ENCODE measurements at regions of chr11 and their contacts with region 1.

Region 1: GRCh38 chr11:35237860-35238715 is 99.1 kb downstream of the CD44 start:
- DNase-seq: peak; percentile 34
- H3K4me3 Mint-ChIP-seq: no peak overlapping the region
- H3K27ac Mint-ChIP-seq: no peak overlapping the region
- H3K4me1 Mint-ChIP-seq: peaks cover 78% of the 10 kb centered on the region
- H3K27me3 Mint-ChIP-seq: peaks cover 13% of the 10 kb centered on the region

Region 2: DNA sequence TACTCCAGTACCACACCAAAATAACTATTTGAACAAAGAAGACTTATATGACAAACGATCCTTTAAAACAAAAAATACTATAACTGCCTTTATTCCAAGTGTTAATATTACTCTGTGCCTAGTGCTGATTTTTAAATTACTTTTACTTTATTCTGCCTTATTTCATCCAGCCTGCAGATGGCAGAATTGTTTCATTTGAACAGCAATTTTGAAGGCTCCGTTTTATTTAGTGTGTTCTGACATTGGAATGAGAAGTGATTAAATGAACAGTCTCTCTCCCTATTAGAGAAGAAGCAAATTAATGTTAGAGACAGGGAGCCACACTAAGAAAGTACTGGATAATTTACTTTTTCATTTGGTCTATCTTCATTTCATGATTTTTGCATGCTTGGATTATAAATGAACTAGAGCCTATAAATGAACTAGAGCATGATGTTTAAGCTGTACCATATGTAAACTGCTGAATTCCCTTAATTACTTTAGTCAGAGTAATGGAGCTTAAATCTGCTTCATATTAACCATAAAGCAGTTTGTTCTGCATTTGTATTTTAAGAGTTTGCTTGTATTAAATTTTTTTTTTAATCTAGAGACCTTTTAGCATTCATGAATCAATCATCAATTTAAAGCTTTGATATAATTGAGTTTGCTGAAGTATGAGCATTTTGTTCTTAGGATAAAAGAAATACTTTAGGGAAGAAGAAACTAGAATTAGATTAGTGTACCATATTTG is 311.8 kb before region 1 on chr11:
- intact Hi-C with region 1: loop called (anchors 5 kb)
- DNase-seq: no peak
- H3K4me3 Mint-ChIP-seq: no peak overlapping the region
- H3K27ac Mint-ChIP-seq: no peak overlapping the region
- H3K4me1 Mint-ChIP-seq: peaks cover 15% of the 10 kb centered on the region
- H3K27me3 Mint-ChIP-seq: no peaks in the 10 kb centered on the region

Region 3: DNA sequence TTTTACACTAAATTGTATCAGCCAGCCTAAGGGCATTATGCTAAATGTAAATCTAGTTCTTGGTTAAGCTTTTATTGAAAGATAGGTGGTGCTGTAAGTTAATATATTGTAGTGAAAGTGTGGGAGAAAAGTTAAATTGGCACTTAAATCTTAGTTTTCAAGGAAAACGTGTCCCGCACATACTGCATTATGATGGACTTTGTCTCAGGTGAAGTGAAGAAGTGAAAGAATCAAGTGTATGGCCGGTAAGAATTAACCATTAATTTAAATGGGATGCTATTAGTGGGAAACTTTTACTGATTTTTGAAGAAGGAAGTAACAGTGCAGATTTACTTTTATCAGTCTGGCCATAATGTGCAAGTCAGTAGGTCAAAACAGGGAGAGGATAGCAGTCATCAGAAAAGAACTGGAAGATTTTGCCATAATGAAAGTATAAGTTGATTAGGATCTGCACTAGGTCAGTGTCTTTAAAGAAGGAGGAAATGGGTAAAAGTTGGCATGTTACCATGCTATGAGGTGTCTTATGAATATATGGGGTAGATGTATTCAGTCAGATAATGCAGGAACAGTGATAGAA is 240.0 kb before region 1 on chr11:
- intact Hi-C with region 1: loop called (anchors 2 kb)
- DNase-seq: no peak
- H3K4me3 Mint-ChIP-seq: peak overlapping the region; percentile 10
- H3K27ac Mint-ChIP-seq: no peak overlapping the region
- H3K4me1 Mint-ChIP-seq: peaks cover 22% of the 10 kb centered on the region
- H3K27me3 Mint-ChIP-seq: peaks cover 2% of the 10 kb centered on the region

Region 4: GRCh38 chr11:35030716-35031213 is 207.3 kb before region 1 on chr11:
- intact Hi-C with region 1: loop called (anchors 2 kb)
- DNase-seq: no peak
- H3K4me3 Mint-ChIP-seq: peak overlapping the region; percentile 51
- H3K27ac Mint-ChIP-seq: peak overlapping the region; percentile 88
- H3K4me1 Mint-ChIP-seq: peaks cover 44% of the 10 kb centered on the region
- H3K27me3 Mint-ChIP-seq: peaks cover 17% of the 10 kb centered on the region